Esophagus muscularis mucosa (tissue), 4 donors: ENCODE measurements at regions of chr16 and their contacts with region 1.

Region 1: DNA sequence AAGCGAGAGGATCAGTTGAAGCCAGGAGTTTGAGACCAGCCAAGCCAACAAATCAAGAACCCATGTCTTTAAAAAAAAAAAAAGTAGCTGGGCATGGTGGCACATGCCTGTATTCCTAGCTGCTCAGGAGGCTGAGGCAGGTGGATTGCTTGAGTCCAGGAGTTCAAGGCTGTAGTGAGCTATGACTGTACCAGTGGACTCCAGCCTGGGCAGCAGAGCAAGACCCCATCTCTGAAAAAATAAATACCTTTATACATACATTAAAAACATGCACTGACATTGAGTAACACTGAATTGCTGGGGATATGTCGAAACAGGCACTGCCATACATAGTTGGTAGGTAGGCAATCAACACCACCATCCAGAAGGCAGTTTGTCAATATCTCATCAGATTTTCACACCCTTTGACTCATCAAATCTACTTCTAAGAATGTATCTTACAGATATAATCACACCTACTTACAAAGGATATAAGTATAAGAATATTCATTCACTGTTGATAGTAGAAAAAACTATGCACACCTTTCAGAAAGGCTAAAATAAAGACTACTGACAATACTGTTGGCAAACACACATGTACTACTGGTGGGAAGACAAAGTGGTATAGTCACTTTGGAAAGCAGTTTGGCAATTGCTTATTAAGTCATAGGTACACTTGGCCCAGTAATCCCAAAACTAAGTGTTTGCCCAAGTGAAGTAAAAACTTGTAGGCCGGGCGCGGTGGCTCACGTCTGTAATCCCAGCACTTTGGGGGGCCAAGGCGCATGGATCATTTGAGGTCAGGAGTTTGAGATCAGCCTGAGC is 6.4 kb upstream of the CEP20 start:
- DNase-seq: no peak
- H3K4me3 ChIP-seq: no peak overlapping the region
- H3K27ac ChIP-seq: no peak overlapping the region
- H3K4me1 ChIP-seq: peaks cover 0 to 4% (median 0%) of the 10 kb centered on the region in 4 donors
- H3K27me3 ChIP-seq: no peaks in the 10 kb centered on the region
- CTCF ChIP-seq: no peak
- EP300 ChIP-seq: no peak
- POLR2A ChIP-seq: no peak

Region 2: GRCh38 chr16:15928261-15929104 is 33.7 kb after region 1 on chr16:
- intact Hi-C with region 1: loop called (anchors 5 kb)
- DNase-seq: no peak
- H3K4me3 ChIP-seq: no peak overlapping the region
- H3K27ac ChIP-seq: no peak overlapping the region
- H3K4me1 ChIP-seq: no peaks in the 10 kb centered on the region
- H3K27me3 ChIP-seq: no peaks in the 10 kb centered on the region
- CTCF ChIP-seq: no peak
- EP300 ChIP-seq: no peak
- POLR2A ChIP-seq: no peak